Activated CD4-positive, alpha-beta memory T cell treated with anti-CD3 and anti-CD28 coated beads for 36 hours (primary cell): ENCODE measurements at regions of chr10 and their contacts with region 1.

Region 1: GRCh38 chr10:89609833-89610346 is 35.2 kb downstream of the PANK1 start:
- DNase-seq: peak; percentile 13
- H3K4me3 Mint-ChIP-seq: no peak overlapping the region
- H3K27ac Mint-ChIP-seq: peak overlapping the region; percentile 55
- H3K4me1 Mint-ChIP-seq: peaks cover 22% of the 10 kb centered on the region
- H3K27me3 Mint-ChIP-seq: no peaks in the 10 kb centered on the region

Region 2: DNA sequence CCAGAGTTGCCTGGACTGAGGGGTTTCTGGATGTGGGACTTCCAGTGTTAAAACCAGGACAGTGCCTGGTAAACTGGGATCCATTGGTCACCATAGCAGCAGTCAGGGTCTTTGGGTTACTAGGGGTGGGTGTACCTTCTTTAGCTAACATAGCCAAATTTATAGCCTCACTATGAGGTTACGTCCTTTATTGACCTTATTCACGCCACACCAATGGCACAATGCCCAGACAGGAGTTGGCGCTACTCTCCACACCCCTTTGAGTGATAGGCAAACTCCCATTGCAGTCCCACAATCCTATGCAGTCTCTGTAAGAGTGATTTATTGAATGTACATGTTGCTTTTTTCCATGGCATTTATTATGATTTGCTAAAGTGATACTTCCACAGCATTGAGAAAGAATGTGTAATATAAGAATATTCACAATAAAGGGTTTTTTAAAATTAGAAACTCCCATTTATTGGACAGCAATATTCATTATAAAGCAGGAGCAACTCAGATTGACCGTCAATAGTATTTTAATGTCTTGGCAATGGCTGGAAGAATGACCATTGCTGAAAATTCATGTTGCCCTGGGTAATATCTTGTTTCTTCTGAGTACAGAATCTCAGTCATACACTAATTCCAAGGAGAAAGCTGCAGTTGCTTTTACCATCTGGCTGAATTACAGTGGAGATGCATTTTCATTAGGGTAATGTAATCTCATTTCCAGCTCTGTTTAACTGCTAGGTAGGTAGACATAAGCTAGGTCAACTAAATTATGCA is 169.5 kb before region 1 on chr10:
- CTCF ChIA-PET with region 1: no interaction called
- POLR2A ChIA-PET with region 1: no interaction called
- intact Hi-C with region 1: no loop called
- DNase-seq: no peak
- H3K4me3 Mint-ChIP-seq: no peak overlapping the region
- H3K27ac Mint-ChIP-seq: no peak overlapping the region
- H3K4me1 Mint-ChIP-seq: no peaks in the 10 kb centered on the region
- H3K27me3 Mint-ChIP-seq: peaks cover 11% of the 10 kb centered on the region

Region 3: GRCh38 chr10:89643431-89644331 is 33.8 kb after region 1 on chr10:
- CTCF ChIA-PET with region 1: no interaction called
- POLR2A ChIA-PET with region 1: interaction called, 4 read pairs
- intact Hi-C with region 1: loop called (anchors 2 kb)
- DNase-seq: peak; percentile 81
- H3K4me3 Mint-ChIP-seq: no peak overlapping the region
- H3K27ac Mint-ChIP-seq: no peak overlapping the region
- H3K4me1 Mint-ChIP-seq: peaks cover 7% of the 10 kb centered on the region
- H3K27me3 Mint-ChIP-seq: no peaks in the 10 kb centered on the region